Breast epithelium (tissue), 4 donors: ENCODE measurements at regions of chr16 and their contacts with region 1.

Region 1: GRCh38 chr16:8519179-8519578 is 71.1 kb downstream of the TMEM114 start:
- DNase-seq: no peak
- H3K4me3 ChIP-seq: no peak overlapping the region
- H3K27ac ChIP-seq: no peak overlapping the region
- H3K4me1 ChIP-seq: no peaks in the 10 kb centered on the region
- H3K27me3 ChIP-seq: peaks cover 0 to 19% of the 10 kb centered on the region in 2 donors
- CTCF ChIP-seq: no peak
- POLR2A ChIP-seq: no peak

Region 2: DNA sequence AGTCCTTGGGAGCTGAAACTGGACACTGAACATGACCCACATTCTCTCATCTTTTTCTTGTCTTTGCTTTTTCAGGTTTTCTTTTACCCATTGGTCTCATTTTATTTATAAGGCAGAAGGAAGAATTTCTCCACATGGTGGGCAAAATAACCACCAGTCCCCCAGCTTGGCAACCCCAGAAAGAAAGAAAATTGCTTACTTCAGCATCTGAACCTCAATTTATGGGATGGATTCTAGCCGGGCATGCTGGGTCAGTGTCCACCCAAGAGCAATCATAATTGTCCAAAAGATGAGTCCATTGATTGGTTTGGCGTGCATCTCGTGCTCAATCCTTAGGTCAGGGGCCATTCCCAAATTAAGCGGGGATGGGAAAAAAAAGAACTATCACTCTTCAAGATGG is 92.6 kb before region 1 on chr16:
- intact Hi-C with region 1: no loop called
- DNase-seq: no peak
- H3K4me3 ChIP-seq: no peak overlapping the region
- H3K27ac ChIP-seq: no peak overlapping the region
- H3K4me1 ChIP-seq: no peaks in the 10 kb centered on the region
- H3K27me3 ChIP-seq: no peaks in the 10 kb centered on the region
- CTCF ChIP-seq: no peak
- POLR2A ChIP-seq: no peak

Region 3: DNA sequence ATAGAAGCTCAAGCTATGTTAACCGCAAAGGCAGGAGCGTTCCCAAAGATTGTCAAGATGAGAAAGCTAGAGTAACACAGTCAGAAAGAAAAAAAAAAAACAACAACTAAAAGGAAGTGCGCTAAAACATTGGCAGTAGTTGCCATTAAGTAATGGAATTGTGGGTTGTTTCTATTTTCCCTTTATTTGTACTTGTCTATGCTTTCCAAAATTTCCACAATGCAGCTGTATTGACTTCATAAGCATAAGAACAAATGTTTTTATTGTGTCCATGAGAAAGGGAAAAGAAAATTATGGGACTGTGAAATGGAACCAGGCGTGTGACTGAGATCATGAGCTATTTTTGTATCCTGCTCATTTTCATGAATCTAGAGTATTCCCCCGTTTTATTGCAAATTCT is 82.2 kb before region 1 on chr16:
- intact Hi-C with region 1: no loop called
- DNase-seq: no peak
- H3K4me3 ChIP-seq: no peak overlapping the region
- H3K27ac ChIP-seq: no peak overlapping the region
- H3K4me1 ChIP-seq: no peaks in the 10 kb centered on the region
- H3K27me3 ChIP-seq: no peaks in the 10 kb centered on the region
- CTCF ChIP-seq: no peak
- POLR2A ChIP-seq: no peak

Region 4: GRCh38 chr16:8493972-8494371 is 25.2 kb before region 1 on chr16:
- intact Hi-C with region 1: loop called (anchors 1 kb)
- DNase-seq: no peak
- H3K4me3 ChIP-seq: no peak overlapping the region
- H3K27ac ChIP-seq: no peak overlapping the region
- H3K4me1 ChIP-seq: no peaks in the 10 kb centered on the region
- H3K27me3 ChIP-seq: peaks cover 0 to 8% of the 10 kb centered on the region in 2 donors
- CTCF ChIP-seq: no peak
- POLR2A ChIP-seq: no peak

Region 5: GRCh38 chr16:8795091-8795490 is 275.9 kb after region 1 on chr16:
- intact Hi-C with region 1: no loop called
- DNase-seq: no peak
- H3K4me3 ChIP-seq: no peak overlapping the region
- H3K27ac ChIP-seq: no peak overlapping the region
- H3K4me1 ChIP-seq: peaks cover 0 to 14% of the 10 kb centered on the region in 2 donors
- H3K27me3 ChIP-seq: no peaks in the 10 kb centered on the region
- CTCF ChIP-seq: no peak
- POLR2A ChIP-seq: no peak